ENCODE measurements at regions of chr19 and their contacts with region 1.

Region 1: DNA sequence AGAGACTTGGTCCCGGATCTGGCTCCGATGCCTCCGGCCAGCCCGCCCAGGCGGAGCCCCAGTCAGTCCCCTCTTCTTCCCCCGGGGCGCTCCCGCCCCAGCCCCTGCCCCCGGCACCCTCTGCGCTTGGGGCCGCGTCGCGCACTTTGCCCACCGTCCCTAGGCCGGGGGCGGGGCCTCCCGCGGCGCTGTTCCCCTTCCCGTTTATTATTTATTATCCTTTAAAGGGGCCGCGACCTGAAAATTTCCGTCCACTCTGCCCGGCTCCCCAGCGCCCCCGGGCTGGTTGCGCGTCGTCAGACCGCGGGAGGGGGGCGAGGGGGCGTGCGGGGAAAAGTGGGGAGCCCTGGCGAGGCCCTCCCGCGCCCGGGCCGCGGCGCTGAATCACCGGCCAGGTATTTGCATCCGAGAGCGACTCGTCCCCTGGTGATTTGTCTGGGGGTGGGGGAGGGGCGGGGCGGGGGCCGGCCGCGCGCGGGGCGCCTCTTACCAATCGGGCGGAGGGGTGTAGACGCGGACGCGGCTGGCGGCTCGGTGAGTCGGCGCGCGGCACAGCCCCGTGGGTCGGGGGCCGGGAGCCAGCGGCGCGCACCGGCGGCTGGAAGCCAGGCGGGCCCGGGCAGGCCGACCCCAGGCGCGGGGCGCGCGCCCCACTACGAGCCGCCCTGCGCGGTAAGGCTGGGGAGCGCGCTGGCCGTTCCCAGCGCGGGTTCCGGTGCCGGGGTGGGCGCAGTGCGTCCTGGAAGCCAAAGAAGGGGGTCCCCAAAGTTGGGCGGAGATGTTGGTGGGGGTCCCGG is at the start of gene ARID3A:
- DNase-seq: peak; percentile 92
- ATAC-seq: peak; percentile 65
- H3K4me3 ChIP-seq: peak within 1 kb of the TSS; percentile 71 to 94 (median 86)
- H3K4me3 Mint-ChIP-seq: peak within 1 kb of the TSS; percentile 91
- H3K27ac ChIP-seq: peak within 1 kb of the TSS; percentile 85 to 94
- H3K27ac Mint-ChIP-seq: peak within 1 kb of the TSS; percentile 95
- H3K4me1 ChIP-seq: peaks cover 18 to 39% of the 10 kb centered on the region in 2 donors
- H3K4me1 Mint-ChIP-seq: peaks cover 22% of the 10 kb centered on the region
- H3K27me3 ChIP-seq: no peaks in the 10 kb centered on the region
- H3K27me3 Mint-ChIP-seq: no peaks in the 10 kb centered on the region
- CTCF ChIP-seq: no peak
- total RNA-seq, gene ARID3A: 60.5 and 66.7 TPM in 2 replicates

Region 2: GRCh38 chr19:662962-663681 is 262.6 kb before region 1 on chr19 and contains the start of gene RNF126:
- CTCF ChIA-PET with region 1: no interaction called
- POLR2A ChIA-PET with region 1: no interaction called
- intact Hi-C with region 1: loop called (anchors 10 kb)
- DNase-seq: peak; percentile 94
- ATAC-seq: peak; percentile 71
- H3K4me3 ChIP-seq: peak within 1 kb of the TSS; percentile 65 to 94 (median 82)
- H3K4me3 Mint-ChIP-seq: peak within 1 kb of the TSS; percentile 96
- H3K27ac ChIP-seq: peak within 1 kb of the TSS; percentile 87 to 97
- H3K27ac Mint-ChIP-seq: peak within 1 kb of the TSS; percentile 98
- H3K4me1 ChIP-seq: peaks cover 31 to 60% of the 10 kb centered on the region in 2 donors
- H3K4me1 Mint-ChIP-seq: peaks cover 45% of the 10 kb centered on the region
- H3K27me3 ChIP-seq: no peaks in the 10 kb centered on the region
- H3K27me3 Mint-ChIP-seq: no peaks in the 10 kb centered on the region
- CTCF ChIP-seq: no peak
- total RNA-seq, gene RNF126: 74.3 and 88.8 TPM in 2 replicates

Region 3: GRCh38 chr19:940591-941291 is 15.0 kb after region 1 on chr19:
- CTCF ChIA-PET with region 1: interaction called, 16 read pairs
- POLR2A ChIA-PET with region 1: interaction called, 5 read pairs
- intact Hi-C with region 1: loop called (anchors 1 kb)
- DNase-seq: peak; percentile 84
- ATAC-seq: peak; percentile 69
- H3K4me3 ChIP-seq: peak overlapping the region in 4 of 5 experiments; percentile 23 to 60 (median 48)
- H3K4me3 Mint-ChIP-seq: peak overlapping the region; percentile 86
- H3K27ac ChIP-seq: peak overlapping the region; percentile 3 to 77
- H3K27ac Mint-ChIP-seq: peak overlapping the region; percentile 81
- H3K4me1 ChIP-seq: peaks cover 19 to 36% of the 10 kb centered on the region in 2 donors
- H3K4me1 Mint-ChIP-seq: peaks cover 39% of the 10 kb centered on the region
- H3K27me3 ChIP-seq: no peaks in the 10 kb centered on the region
- H3K27me3 Mint-ChIP-seq: no peaks in the 10 kb centered on the region
- CTCF ChIP-seq: no peak

Region 4: DNA sequence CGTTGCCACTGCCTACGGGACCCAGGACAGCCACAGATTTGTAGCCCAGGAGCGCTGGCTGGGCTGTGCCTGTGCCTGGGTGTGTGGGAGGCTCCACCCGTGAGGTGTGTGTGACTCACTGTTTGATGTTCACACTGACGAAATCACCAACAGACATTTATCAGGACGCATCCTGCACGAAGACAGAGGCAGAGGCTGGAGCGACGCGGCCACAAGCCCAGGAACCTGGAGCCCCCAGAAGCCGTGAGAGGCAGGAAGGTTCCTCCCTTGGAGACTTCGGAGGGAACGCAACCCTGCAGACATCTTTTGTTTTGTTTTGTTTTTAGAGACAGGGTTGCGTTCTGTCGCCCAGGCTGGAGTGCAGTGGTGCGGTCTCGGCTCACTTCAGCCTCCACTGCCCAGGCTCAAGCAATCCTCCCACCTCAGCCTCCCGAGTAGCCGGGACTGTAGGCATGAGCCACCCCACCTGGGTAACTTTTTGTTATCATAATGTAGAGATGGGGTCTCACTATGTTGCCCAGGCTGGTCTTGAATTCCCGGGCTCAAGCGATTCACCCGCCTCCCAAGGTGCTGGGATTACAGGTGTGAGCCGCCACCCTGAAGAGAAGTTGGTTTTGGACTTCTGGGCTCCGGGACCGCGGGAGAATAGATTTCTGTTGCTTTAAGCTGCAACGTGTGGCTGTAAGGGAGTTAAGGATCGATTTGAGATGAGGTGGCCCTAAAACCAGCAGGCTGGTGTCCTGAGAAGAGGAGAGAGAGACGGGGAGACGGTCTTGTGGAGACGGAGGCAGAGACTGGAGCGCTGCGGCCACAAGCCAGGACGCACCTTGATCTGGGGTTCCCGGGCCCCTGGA is 33.5 kb after region 1 on chr19:
- CTCF ChIA-PET with region 1: no interaction called
- POLR2A ChIA-PET with region 1: interaction called, 11 read pairs
- intact Hi-C with region 1: no loop called
- DNase-seq: no peak
- ATAC-seq: no peak
- H3K4me3 ChIP-seq: no peak overlapping the region
- H3K4me3 Mint-ChIP-seq: no peak overlapping the region
- H3K27ac ChIP-seq: no peak overlapping the region
- H3K27ac Mint-ChIP-seq: no peak overlapping the region
- H3K4me1 ChIP-seq: peaks cover 3 to 14% of the 10 kb centered on the region in 2 donors
- H3K4me1 Mint-ChIP-seq: peaks cover 7% of the 10 kb centered on the region
- H3K27me3 ChIP-seq: no peaks in the 10 kb centered on the region
- H3K27me3 Mint-ChIP-seq: no peaks in the 10 kb centered on the region
- CTCF ChIP-seq: no peak

Region 5: GRCh38 chr19:996051-996838 is 70.5 kb after region 1 on chr19:
- CTCF ChIA-PET with region 1: interaction called, 11 read pairs
- POLR2A ChIA-PET with region 1: no interaction called
- intact Hi-C with region 1: loop called (anchors 1 kb)
- DNase-seq: peak; percentile 77
- ATAC-seq: peak; percentile 62
- H3K4me3 ChIP-seq: peak overlapping the region in 1 of 5 experiments; percentile 8
- H3K4me3 Mint-ChIP-seq: peak overlapping the region; percentile 73
- H3K27ac ChIP-seq: no peak overlapping the region
- H3K27ac Mint-ChIP-seq: peak overlapping the region; percentile 84
- H3K4me1 ChIP-seq: peaks cover 16 to 17% of the 10 kb centered on the region in 2 donors
- H3K4me1 Mint-ChIP-seq: peaks cover 12% of the 10 kb centered on the region
- H3K27me3 ChIP-seq: peaks cover 0 to 50% (median 26%) of the 10 kb centered on the region in 4 experiments
- H3K27me3 Mint-ChIP-seq: peaks cover 21% of the 10 kb centered on the region
- CTCF ChIP-seq: no peak

Region 6: DNA sequence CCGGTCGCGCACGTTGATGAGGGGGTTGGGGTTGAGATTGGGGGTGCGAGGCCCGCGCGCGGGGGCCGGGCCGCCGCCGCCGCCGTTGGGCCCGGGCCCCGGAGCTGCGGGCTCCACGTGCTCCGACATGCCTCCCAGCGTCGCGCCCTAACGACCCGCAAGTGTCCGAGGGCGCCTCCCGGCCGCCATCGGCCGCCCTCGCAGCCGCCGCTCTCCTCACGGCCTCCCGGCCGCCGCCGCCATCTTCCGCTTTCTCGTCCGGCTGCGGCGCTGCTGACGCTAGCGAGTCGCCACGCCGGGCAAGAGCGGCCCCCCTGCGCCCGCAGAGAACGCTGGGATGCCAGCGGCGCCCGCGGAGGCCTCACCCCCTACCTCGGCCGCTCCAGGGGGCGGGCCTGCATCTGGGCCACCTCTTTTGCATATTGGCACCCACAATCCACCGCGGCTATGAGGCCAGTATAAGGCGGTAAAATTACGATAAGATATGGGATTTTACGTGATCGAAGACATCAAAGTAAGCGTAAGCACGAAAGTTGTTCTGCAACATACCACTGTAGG is 95.2 kb after region 1 on chr19 and contains the start of gene TMEM259:
- CTCF ChIA-PET with region 1: no interaction called
- POLR2A ChIA-PET with region 1: no interaction called
- intact Hi-C with region 1: loop called (anchors 1 kb)
- DNase-seq: peak; percentile 99
- ATAC-seq: peak; percentile 87
- H3K4me3 ChIP-seq: peak within 1 kb of the TSS; percentile 62 to 94 (median 87)
- H3K4me3 Mint-ChIP-seq: peak within 1 kb of the TSS; percentile 89
- H3K27ac ChIP-seq: peak within 1 kb of the TSS; percentile 98 to 99
- H3K27ac Mint-ChIP-seq: peak within 1 kb of the TSS; percentile 100
- H3K4me1 ChIP-seq: peaks cover 42 to 60% of the 10 kb centered on the region in 2 donors
- H3K4me1 Mint-ChIP-seq: peaks cover 45% of the 10 kb centered on the region
- H3K27me3 ChIP-seq: no peaks in the 10 kb centered on the region
- H3K27me3 Mint-ChIP-seq: no peaks in the 10 kb centered on the region
- CTCF ChIP-seq: no peak
- total RNA-seq, gene TMEM259: 373 and 377 TPM in 2 replicates

Region 7: GRCh38 chr19:1189419-1189818 is 263.7 kb after region 1 on chr19:
- CTCF ChIA-PET with region 1: interaction called, 5 read pairs
- POLR2A ChIA-PET with region 1: interaction called, 3 read pairs
- intact Hi-C with region 1: loop called (anchors 5 kb)
- DNase-seq: no peak
- ATAC-seq: no peak
- H3K4me3 ChIP-seq: no peak overlapping the region
- H3K4me3 Mint-ChIP-seq: no peak overlapping the region
- H3K27ac ChIP-seq: no peak overlapping the region
- H3K27ac Mint-ChIP-seq: no peak overlapping the region
- H3K4me1 ChIP-seq: no peaks in the 10 kb centered on the region
- H3K4me1 Mint-ChIP-seq: no peaks in the 10 kb centered on the region
- H3K27me3 ChIP-seq: no peaks in the 10 kb centered on the region
- H3K27me3 Mint-ChIP-seq: no peaks in the 10 kb centered on the region
- CTCF ChIP-seq: no peak